Endothelial cell of umbilical vein (primary cell): ENCODE measurements at regions of chr1 and their contacts with region 1.

Region 1: GRCh38 chr1:180262572-180263488 is 32.8 kb downstream of the LHX4 start:
- DNase-seq: no peak
- H3K4me3 ChIP-seq: no peak overlapping the region
- H3K27ac ChIP-seq: no peak overlapping the region
- H3K4me1 ChIP-seq: no peaks in the 10 kb centered on the region
- H3K27me3 ChIP-seq: no peaks in the 10 kb centered on the region
- CTCF ChIP-seq: no peak
- POLR2A ChIP-seq: no peak

Region 2: DNA sequence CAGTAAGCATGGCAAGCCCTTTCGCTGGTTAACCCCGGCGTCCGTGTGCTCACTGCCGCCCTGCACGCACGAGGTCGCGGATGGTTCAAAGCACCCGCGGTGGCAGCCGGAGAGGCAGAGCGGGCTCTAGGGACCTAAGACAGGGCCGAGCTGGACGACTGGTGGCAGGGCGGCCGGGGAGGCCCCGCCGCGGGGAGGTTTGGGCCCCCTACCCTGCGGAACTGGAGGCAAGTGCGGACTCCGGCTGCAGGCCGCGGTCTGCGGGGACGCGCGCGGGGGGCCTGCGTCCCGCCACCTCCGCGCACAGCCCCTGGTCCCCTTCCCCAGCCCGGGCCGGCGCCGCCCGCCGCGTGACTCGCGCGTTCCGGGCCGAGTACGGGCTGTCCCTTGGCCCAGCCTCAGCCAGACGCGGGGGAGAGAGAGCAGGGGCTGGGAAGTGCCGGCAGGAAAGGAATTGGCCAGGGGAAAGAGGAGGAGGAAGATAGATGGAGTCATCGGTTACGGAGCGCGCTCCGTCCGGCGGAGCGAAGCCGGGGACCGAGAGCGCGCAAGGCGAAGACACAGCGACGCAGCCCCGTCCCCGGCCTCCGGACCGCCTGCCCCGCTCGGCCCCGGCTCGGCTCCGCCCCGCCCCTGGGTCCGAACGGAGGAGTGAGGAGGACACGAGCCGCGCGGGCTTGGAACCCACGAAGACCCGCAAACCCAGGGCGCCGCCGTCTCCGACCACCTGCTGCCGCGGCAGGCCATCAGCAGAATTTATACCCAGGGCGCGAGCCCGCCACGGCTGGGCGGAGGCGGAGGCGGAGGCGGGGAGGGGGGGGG is 33.5 kb before region 1 on chr1:
- CTCF ChIA-PET with region 1: no interaction called
- POLR2A ChIA-PET with region 1: no interaction called
- dilution Hi-C with region 1: no loop called
- intact Hi-C with region 1: no loop called
- DNase-seq: peak; percentile 26
- H3K4me3 ChIP-seq: peak overlapping the region; percentile 40 to 52 (median 43)
- H3K27ac ChIP-seq: no peak overlapping the region
- H3K4me1 ChIP-seq: peaks cover 21% of the 10 kb centered on the region
- H3K27me3 ChIP-seq: peaks cover 65 to 92% of the 10 kb centered on the region in 2 experiments
- CTCF ChIP-seq: no peak
- POLR2A ChIP-seq: no peak

Region 3: DNA sequence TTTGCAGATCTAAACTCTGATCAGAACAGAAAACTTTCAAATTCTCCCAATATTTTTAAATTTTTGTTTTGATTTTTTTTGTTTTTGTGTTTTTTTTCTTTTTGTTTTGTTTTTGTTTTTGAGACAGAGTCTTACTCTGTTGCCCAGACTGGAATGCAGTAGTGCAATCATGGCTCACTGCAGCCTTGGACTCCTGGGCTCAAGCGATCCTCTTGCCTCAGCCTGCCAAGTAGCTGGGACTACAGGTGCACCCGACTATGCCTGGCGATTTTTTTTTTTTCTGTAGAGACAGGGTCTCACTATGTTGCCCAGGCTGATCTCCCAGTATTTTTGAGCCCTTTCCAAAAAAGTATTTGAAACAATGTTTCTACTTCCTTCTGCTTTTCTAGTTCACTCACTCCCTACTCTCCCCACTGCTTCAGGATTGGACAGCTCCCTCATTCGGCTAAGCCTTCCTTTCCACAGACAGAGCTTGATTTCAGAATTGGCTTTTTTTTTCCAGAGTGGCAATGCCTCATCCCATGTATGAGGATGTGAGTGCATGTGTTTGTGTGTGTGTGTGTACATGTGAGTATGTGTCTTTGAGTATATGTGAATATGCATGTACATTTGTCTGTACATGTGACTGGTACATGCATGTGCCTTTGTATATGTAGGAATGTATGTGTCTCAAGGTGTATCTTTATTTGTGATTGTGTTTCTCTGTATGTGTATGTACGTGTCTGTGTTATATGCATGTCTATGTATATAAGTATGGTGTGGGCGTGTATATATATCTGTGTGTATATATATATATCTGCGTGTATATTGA is 20.9 kb before region 1 on chr1:
- CTCF ChIA-PET with region 1: interaction called, 11 read pairs
- POLR2A ChIA-PET with region 1: no interaction called
- dilution Hi-C with region 1: no loop called
- intact Hi-C with region 1: no loop called
- DNase-seq: no peak
- H3K4me3 ChIP-seq: no peak overlapping the region
- H3K27ac ChIP-seq: no peak overlapping the region
- H3K4me1 ChIP-seq: no peaks in the 10 kb centered on the region
- H3K27me3 ChIP-seq: peaks cover 47 to 53% of the 10 kb centered on the region in 2 experiments
- CTCF ChIP-seq: no peak
- POLR2A ChIP-seq: no peak